ENCODE measurements at regions of chr17 and their contacts with region 1.

Region 1: DNA sequence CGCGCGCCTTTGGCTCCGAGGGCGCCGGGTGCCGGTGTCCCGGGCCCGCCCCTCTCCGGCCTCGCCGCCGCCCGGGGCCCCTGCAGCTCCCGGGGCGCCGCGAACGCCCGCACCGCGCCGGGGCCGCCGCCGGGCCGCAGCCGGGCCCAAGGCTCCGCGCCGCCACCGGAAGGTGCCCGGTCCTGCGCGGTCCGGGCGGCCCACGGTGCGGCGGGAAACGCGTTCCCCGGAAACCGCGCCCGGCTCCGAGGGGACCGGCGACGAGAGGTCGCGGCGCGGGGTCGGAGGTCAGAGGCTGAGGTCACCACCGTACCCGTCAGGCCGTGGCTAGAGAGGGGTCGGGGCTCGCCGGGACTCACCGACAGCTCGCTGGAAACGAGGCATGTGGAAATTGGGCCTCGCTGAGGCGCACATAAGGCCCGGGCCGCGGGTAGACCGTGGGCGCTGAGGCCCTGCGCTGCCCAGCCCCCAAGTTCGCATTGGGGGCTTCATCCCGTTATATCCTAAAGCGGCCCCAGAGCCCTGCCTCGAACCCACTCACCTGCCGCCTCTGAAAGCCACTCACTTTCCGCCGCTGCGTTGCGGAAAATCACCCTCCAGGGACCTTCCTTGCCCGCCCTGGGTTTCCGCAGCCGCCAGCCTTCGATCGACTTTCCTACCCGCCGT is at the start of gene DUS1L:
- DNase-seq: peak; percentile 67
- ATAC-seq: peak; percentile 93
- H3K4me3 Mint-ChIP-seq: peak within 1 kb of the TSS; percentile 85
- H3K27ac Mint-ChIP-seq: peak within 1 kb of the TSS; percentile 88
- H3K4me1 Mint-ChIP-seq: peaks cover 14% of the 10 kb centered on the region
- H3K27me3 Mint-ChIP-seq: no peaks in the 10 kb centered on the region
- CTCF ChIP-seq: no peak
- total RNA-seq, gene DUS1L: 139 to 140 TPM

Region 2: GRCh38 chr17:82051776-82052637 is 13.8 kb before region 1 on chr17 and contains the starts of genes GPS1 and RFNG:
- CTCF ChIA-PET with region 1: no interaction called
- POLR2A ChIA-PET with region 1: interaction called, 98 read pairs
- intact Hi-C with region 1: no loop called
- DNase-seq: peak; percentile 89
- ATAC-seq: peak; percentile 92
- H3K4me3 Mint-ChIP-seq: peak within 1 kb of the TSS; percentile 82
- H3K27ac Mint-ChIP-seq: peak within 1 kb of the TSS; percentile 75
- H3K4me1 Mint-ChIP-seq: peaks cover 21% of the 10 kb centered on the region
- H3K27me3 Mint-ChIP-seq: no peaks in the 10 kb centered on the region
- CTCF ChIP-seq: no peak
- total RNA-seq, gene GPS1: 82.7 to 88.6 TPM
- total RNA-seq, gene RFNG: 14.2 to 15.3 TPM

Region 3: GRCh38 chr17:82077617-82078358 is 12.0 kb after region 1 on chr17:
- CTCF ChIA-PET with region 1: no interaction called
- POLR2A ChIA-PET with region 1: interaction called, 10 read pairs
- intact Hi-C with region 1: no loop called
- DNase-seq: no peak
- ATAC-seq: no peak
- H3K4me3 Mint-ChIP-seq: no peak overlapping the region
- H3K27ac Mint-ChIP-seq: no peak overlapping the region
- H3K4me1 Mint-ChIP-seq: no peaks in the 10 kb centered on the region
- H3K27me3 Mint-ChIP-seq: no peaks in the 10 kb centered on the region
- CTCF ChIP-seq: no peak

Region 4: GRCh38 chr17:82098072-82098821 is 32.5 kb after region 1 on chr17 and contains the start of gene FASN:
- CTCF ChIA-PET with region 1: no interaction called
- POLR2A ChIA-PET with region 1: interaction called, 16 read pairs
- intact Hi-C with region 1: no loop called
- DNase-seq: peak; percentile 95
- ATAC-seq: peak; percentile 82
- H3K4me3 Mint-ChIP-seq: peak within 1 kb of the TSS; percentile 80
- H3K27ac Mint-ChIP-seq: peak within 1 kb of the TSS; percentile 20
- H3K4me1 Mint-ChIP-seq: peaks cover 16% of the 10 kb centered on the region
- H3K27me3 Mint-ChIP-seq: no peaks in the 10 kb centered on the region
- CTCF ChIP-seq: peak; percentile 26
- total RNA-seq, gene FASN: 250 to 260 TPM

Region 5: GRCh38 chr17:82105882-82106687 is 40.3 kb after region 1 on chr17:
- CTCF ChIA-PET with region 1: interaction called, 3 read pairs
- POLR2A ChIA-PET with region 1: interaction called, 11 read pairs
- intact Hi-C with region 1: no loop called
- DNase-seq: peak; percentile 80
- ATAC-seq: peak; percentile 89
- H3K4me3 Mint-ChIP-seq: peak overlapping the region; percentile 90
- H3K27ac Mint-ChIP-seq: peak overlapping the region; percentile 95
- H3K4me1 Mint-ChIP-seq: peaks cover 27% of the 10 kb centered on the region
- H3K27me3 Mint-ChIP-seq: no peaks in the 10 kb centered on the region
- CTCF ChIP-seq: peak; percentile 50

Region 6: GRCh38 chr17:82384730-82385481 is 319.1 kb after region 1 on chr17:
- CTCF ChIA-PET with region 1: no interaction called
- POLR2A ChIA-PET with region 1: no interaction called
- intact Hi-C with region 1: no loop called
- DNase-seq: no peak
- ATAC-seq: no peak
- H3K4me3 Mint-ChIP-seq: no peak overlapping the region
- H3K27ac Mint-ChIP-seq: no peak overlapping the region
- H3K4me1 Mint-ChIP-seq: peaks cover 3% of the 10 kb centered on the region
- H3K27me3 Mint-ChIP-seq: peaks cover 12% of the 10 kb centered on the region
- CTCF ChIP-seq: no peak